ENCODE measurements at regions of chr4 and their contacts with region 1.

Region 1: GRCh38 chr4:185640811-185641675 is 105.7 kb upstream of the PDLIM3 start:
- DNase-seq: peak; percentile 12
- ATAC-seq: peak; percentile 66
- H3K4me3 ChIP-seq: no peak overlapping the region
- H3K27ac ChIP-seq: no peak overlapping the region
- H3K4me1 ChIP-seq: no peaks in the 10 kb centered on the region
- H3K27me3 ChIP-seq: peaks cover 0 to 3% of the 10 kb centered on the region in 2 experiments; a peak in 2 of 4 replicates
- CTCF ChIP-seq: peak in 2 of 3 experiments; percentile 34 to 46; a peak in 3 of 6 replicates
- EP300 ChIP-seq: no peak
- POLR2A ChIP-seq: no peak
- RAD21 ChIP-seq: peak; percentile 49; the same call in 1 of the 2 replicates

Region 2: GRCh38 chr4:185343726-185344581 is 297.1 kb before region 1 on chr4:
- CTCF ChIA-PET with region 1: no interaction called
- POLR2A ChIA-PET with region 1: no interaction called
- RAD21 ChIA-PET with region 1: no interaction called
- SMC1A ChIA-PET with region 1: no interaction called
- in situ Hi-C with region 1: no loop called
- intact Hi-C with region 1: no loop called
- DNase-seq: no peak
- ATAC-seq: peak; percentile 48
- H3K4me3 ChIP-seq: no peak overlapping the region
- H3K27ac ChIP-seq: peak overlapping the region; percentile 97
- H3K4me1 ChIP-seq: peaks cover 65% of the 10 kb centered on the region
- H3K27me3 ChIP-seq: no peaks in the 10 kb centered on the region
- CTCF ChIP-seq: no peak
- EP300 ChIP-seq: peak; percentile 26 to 51; a peak in 1 of 4 replicates
- POLR2A ChIP-seq: peak; percentile 49; the same call in 1 of the 2 replicates
- RAD21 ChIP-seq: no peak

Region 3: DNA sequence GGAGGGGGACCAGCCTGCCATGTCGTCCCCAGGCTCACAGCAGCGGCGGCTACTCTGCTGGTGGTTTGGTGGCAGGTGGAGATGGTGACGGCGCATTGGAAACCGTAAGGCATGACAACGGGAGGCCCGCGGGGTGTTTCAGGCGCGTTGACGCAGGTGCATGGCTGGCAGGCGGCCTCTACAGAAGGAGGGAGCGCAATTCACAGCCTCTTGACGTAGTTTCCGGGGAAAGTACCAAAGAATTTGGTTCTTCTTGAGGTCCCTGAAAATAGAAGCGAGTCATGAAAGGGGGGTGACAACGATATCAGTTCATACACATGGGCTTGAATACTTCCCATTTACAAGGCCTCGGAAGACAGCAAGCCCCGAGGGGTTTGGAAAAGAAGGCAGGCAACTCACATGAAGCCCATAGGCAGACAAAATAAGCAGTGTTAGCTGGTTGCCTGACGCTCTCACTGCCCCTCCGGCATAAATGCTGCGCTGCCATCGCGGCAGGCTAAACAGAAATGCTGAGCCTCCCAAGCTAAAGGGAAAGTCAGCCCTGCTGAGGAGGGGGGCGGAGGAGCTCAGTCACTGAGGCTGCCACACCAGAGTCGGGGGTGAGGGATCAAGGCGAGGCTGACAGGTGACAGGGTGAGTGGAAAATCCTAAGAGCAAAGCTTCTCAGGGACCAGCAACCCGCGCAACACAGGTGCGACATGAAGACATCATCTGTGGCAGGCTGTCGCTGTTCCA is 53.4 kb before region 1 on chr4:
- CTCF ChIA-PET with region 1: no interaction called
- POLR2A ChIA-PET with region 1: no interaction called
- RAD21 ChIA-PET with region 1: no interaction called
- SMC1A ChIA-PET with region 1: no interaction called
- in situ Hi-C with region 1: no loop called
- intact Hi-C with region 1: no loop called
- DNase-seq: peak; percentile 26
- ATAC-seq: peak; percentile 98
- H3K4me3 ChIP-seq: no peak overlapping the region; the same call in 1 of the 2 replicates
- H3K27ac ChIP-seq: peak overlapping the region; percentile 70
- H3K4me1 ChIP-seq: peaks cover 9% of the 10 kb centered on the region
- H3K27me3 ChIP-seq: no peaks in the 10 kb centered on the region
- CTCF ChIP-seq: no peak
- EP300 ChIP-seq: peak; percentile 59 to 73; a peak in 2 of 4 replicates
- POLR2A ChIP-seq: 0 out of 2 replicates have a peak, but pooled peaks have one; percentile 52
- RAD21 ChIP-seq: no peak

Region 4: DNA sequence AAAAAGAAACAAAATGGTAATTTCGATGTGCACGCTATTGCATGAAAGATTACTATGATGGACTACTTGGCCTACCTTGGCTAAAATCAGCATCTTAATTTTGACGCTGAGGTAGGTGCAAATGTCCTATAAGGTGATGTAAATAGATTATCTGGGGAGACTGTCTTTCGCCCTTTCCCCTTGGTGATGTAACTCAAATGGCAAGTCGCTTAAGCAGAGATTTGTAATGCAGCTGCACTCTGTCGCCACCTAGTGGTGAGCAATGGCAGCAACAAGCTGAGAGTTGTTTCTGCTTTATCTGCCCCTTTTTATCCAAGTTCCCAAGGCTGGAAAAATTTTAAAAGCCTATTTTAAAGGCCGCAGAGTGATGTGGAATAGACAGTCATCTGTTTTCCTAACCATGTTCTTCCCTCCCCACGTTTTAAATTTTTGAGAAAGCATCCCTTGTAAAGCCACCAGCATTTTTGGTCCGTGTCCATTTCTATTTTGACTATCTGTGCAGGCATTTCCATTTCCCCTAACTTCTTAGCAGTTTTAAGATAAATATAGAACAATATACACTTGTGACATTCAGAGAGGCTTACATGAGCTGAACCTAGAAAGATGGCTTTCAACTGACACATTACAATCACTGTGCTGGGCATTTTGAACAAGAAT is 43.4 kb before region 1 on chr4:
- CTCF ChIA-PET with region 1: no interaction called
- POLR2A ChIA-PET with region 1: no interaction called
- RAD21 ChIA-PET with region 1: no interaction called
- SMC1A ChIA-PET with region 1: no interaction called
- in situ Hi-C with region 1: no loop called
- intact Hi-C with region 1: no loop called
- DNase-seq: peak; percentile 33
- ATAC-seq: peak; percentile 84
- H3K4me3 ChIP-seq: no peak overlapping the region
- H3K27ac ChIP-seq: no peak overlapping the region
- H3K4me1 ChIP-seq: peaks cover 3% of the 10 kb centered on the region; the same call in 1 of the 2 replicates
- H3K27me3 ChIP-seq: no peaks in the 10 kb centered on the region
- CTCF ChIP-seq: peak; percentile 95 to 99 (median 99); a peak in 5 of 6 replicates
- EP300 ChIP-seq: no peak
- POLR2A ChIP-seq: no peak
- RAD21 ChIP-seq: peak; percentile 98

Region 5: DNA sequence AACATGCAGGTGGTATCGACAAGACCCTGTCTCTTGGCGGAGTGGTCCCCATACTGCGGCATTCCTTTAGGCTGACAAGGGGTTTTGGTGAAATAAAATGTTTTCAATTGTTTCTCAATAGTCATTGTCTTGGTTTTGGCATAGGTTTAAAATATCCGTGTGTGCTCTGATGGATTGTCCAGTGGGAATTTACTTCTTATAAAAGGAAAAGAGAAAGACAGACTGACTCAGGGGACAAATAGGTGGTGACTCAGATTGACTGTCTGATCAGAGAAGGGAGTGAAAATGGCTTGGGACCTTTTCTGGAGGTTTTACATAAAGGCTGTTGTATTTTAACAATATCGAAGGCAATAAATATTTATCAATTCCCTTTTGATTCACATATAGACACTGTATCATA is 41.2 kb after region 1 on chr4:
- CTCF ChIA-PET with region 1: no interaction called
- POLR2A ChIA-PET with region 1: no interaction called
- RAD21 ChIA-PET with region 1: no interaction called
- SMC1A ChIA-PET with region 1: no interaction called
- in situ Hi-C with region 1: no loop called
- intact Hi-C with region 1: no loop called
- DNase-seq: no peak
- ATAC-seq: no peak
- H3K4me3 ChIP-seq: no peak overlapping the region
- H3K27ac ChIP-seq: no peak overlapping the region
- H3K4me1 ChIP-seq: no peaks in the 10 kb centered on the region
- H3K27me3 ChIP-seq: no peaks in the 10 kb centered on the region
- CTCF ChIP-seq: no peak
- EP300 ChIP-seq: no peak
- POLR2A ChIP-seq: no peak
- RAD21 ChIP-seq: no peak

Region 6: GRCh38 chr4:185892165-185892564 is 251.1 kb after region 1 on chr4:
- CTCF ChIA-PET with region 1: no interaction called
- POLR2A ChIA-PET with region 1: no interaction called
- RAD21 ChIA-PET with region 1: no interaction called
- SMC1A ChIA-PET with region 1: no interaction called
- in situ Hi-C with region 1: no loop called
- intact Hi-C with region 1: loop called (anchors 5 kb)
- DNase-seq: no peak
- ATAC-seq: no peak
- H3K4me3 ChIP-seq: no peak overlapping the region
- H3K27ac ChIP-seq: no peak overlapping the region
- H3K4me1 ChIP-seq: peaks cover 4% of the 10 kb centered on the region
- H3K27me3 ChIP-seq: no peaks in the 10 kb centered on the region; a peak in 1 of 4 replicates
- CTCF ChIP-seq: no peak
- EP300 ChIP-seq: no peak
- POLR2A ChIP-seq: no peak
- RAD21 ChIP-seq: no peak

Region 7: DNA sequence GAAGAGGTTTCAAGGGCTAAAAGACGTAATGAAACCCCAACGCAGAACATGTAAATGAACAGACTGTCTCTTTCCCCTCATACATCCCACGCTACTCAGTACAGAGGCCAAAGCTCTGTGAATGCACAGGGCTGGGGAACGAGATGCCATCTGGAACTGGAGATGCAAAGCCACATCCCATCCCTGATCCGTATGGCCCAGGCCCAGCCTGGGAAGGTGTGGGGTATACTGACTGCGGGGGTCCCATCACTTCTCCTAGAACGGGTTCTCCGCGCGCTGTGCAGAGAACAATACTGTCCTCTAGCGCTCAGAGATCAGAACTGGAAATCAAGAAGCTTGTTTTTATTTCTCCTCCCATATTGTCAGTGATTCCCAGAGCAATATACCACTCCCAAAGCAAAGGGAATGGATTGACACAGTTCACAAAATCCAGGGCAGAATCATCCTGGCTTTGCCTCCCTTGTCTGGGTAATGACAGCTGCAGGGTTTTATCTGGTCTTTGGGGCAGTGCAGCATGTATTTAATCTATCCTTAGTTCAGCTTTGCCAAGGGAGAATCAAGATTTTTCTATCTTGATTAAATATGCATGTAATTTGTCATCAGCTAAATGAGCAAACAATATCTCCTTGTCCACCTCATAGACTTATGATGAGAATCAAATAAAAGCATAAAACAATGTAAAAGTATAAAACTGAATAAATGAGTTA is 380.6 kb after region 1 on chr4:
- CTCF ChIA-PET with region 1: interaction called, 31 read pairs
- POLR2A ChIA-PET with region 1: no interaction called
- RAD21 ChIA-PET with region 1: interaction called, 4 read pairs
- SMC1A ChIA-PET with region 1: interaction called, 12 read pairs
- in situ Hi-C with region 1: no loop called
- intact Hi-C with region 1: loop called (anchors 1 kb)
- DNase-seq: no peak
- ATAC-seq: peak; percentile 64
- H3K4me3 ChIP-seq: no peak overlapping the region
- H3K27ac ChIP-seq: no peak overlapping the region
- H3K4me1 ChIP-seq: no peaks in the 10 kb centered on the region
- H3K27me3 ChIP-seq: no peaks in the 10 kb centered on the region; a peak in 2 of 4 replicates
- CTCF ChIP-seq: peak; percentile 62 to 81 (median 78)
- EP300 ChIP-seq: no peak
- POLR2A ChIP-seq: no peak
- RAD21 ChIP-seq: peak; percentile 79

Region 8: GRCh38 chr4:186037692-186038658 is 396.9 kb after region 1 on chr4:
- CTCF ChIA-PET with region 1: interaction called, 75 read pairs
- POLR2A ChIA-PET with region 1: no interaction called
- RAD21 ChIA-PET with region 1: interaction called, 20 read pairs
- SMC1A ChIA-PET with region 1: interaction called, 8 read pairs
- in situ Hi-C with region 1: loop called (anchors 5 kb)
- intact Hi-C with region 1: loop called (anchors 1 kb)
- DNase-seq: peak; percentile 36
- ATAC-seq: peak; percentile 84
- H3K4me3 ChIP-seq: no peak overlapping the region
- H3K27ac ChIP-seq: no peak overlapping the region
- H3K4me1 ChIP-seq: no peaks in the 10 kb centered on the region
- H3K27me3 ChIP-seq: peaks cover 0 to 2% of the 10 kb centered on the region in 2 experiments; a peak in 2 of 4 replicates
- CTCF ChIP-seq: peak; percentile 58 to 81 (median 74); a peak in 5 of 6 replicates
- EP300 ChIP-seq: no peak
- POLR2A ChIP-seq: no peak
- RAD21 ChIP-seq: peak; percentile 81

Region 9: DNA sequence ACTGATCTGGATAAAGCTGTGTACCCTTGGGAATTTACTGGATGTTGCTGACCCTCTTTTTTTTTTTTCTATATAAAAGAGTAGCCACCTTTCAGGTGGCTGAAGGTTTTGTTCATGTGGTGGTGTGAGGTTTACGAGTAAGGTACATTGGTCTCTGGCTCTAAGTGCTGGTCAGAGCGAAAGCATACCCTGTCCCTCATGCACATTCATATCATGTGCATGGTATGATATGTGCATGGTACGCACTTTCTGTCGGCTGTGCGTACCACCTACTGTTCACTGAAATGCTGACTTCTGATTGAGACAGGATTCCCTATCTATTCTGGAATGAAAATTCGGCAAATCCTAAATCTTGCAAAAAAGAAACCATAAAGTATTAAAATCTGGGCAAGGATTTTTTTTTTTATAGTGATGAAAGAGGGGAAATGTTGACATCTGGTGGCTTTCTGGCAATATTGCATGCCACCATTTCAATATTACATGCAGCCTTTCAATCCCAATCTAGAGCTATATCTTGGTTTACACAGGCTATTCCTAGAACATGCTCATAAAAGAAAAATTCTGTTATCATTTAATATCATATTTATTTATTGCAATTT is 496.3 kb after region 1 on chr4:
- CTCF ChIA-PET with region 1: interaction called, 6 read pairs
- POLR2A ChIA-PET with region 1: no interaction called
- RAD21 ChIA-PET with region 1: interaction called, 3 read pairs
- SMC1A ChIA-PET with region 1: interaction called, 6 read pairs
- in situ Hi-C with region 1: loop called (anchors 10 kb)
- intact Hi-C with region 1: loop called (anchors 2 kb)
- DNase-seq: no peak
- ATAC-seq: peak; percentile 54
- H3K4me3 ChIP-seq: no peak overlapping the region
- H3K27ac ChIP-seq: no peak overlapping the region
- H3K4me1 ChIP-seq: peaks cover 15% of the 10 kb centered on the region
- H3K27me3 ChIP-seq: no peaks in the 10 kb centered on the region
- CTCF ChIP-seq: peak; percentile 45 to 68 (median 66); a peak in 5 of 6 replicates
- EP300 ChIP-seq: no peak
- POLR2A ChIP-seq: no peak
- RAD21 ChIP-seq: peak; percentile 74